K562 (cell line): ENCODE measurements at regions of chr16 and their contacts with region 1.

Region 1: DNA sequence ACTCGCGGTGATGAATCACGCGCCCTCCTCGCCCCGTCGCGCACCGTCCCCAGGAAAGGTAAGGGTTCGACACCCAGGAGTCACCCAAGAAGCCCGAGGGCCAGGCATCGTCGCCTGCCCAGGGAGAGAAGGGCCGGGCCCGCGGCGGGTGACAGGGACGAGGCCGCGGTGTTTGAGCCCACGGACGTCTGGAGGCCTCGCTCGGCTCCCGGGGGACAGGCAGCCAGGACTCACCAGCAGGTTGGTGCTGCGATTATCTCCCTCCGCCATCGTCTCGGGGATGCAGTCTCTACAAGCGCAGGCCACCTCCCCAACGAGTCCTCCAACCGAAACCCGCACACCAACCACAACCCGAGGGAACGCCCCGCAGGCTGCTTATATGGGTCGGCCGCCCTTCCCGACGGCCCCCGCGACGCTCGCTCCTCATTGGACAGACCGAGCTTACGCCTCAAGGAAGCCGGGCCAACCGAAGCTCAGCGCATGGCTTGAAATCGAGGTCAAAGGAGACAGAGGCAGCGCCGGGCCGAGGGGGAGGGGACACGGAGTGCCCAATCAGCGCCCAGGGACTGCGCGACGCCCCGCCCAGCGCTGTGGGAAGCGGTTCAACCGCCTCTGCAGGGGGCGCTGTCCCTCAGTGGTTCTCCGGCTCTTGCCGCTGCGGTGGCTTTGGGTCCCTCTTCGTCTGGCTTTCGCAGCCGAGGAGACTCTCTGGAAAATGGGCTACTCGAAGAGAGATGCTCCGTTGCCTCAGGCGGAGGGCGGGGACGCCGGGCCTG is at the start of gene ARL6IP1:
- DNase-seq: peak; percentile 97 to 99 (median 98)
- ATAC-seq: peak; percentile 96
- H3K4me3 ChIP-seq: peak within 1 kb of the TSS; percentile 85
- H3K27ac ChIP-seq: peak within 1 kb of the TSS; percentile 90
- H3K4me1 ChIP-seq: peaks cover 18 to 23% of the 10 kb centered on the region in 2 experiments; a peak in 4 of 5 replicates
- H3K27me3 ChIP-seq: no peaks in the 10 kb centered on the region
- CTCF ChIP-seq: peak; percentile 80 to 86 (median 85)
- EP300 ChIP-seq: peak; percentile 34
- POLR2A ChIP-seq: peak; percentile 99
- RAD21 ChIP-seq: peak; percentile 31 to 69; a peak in 3 of 4 replicates
- polyA plus RNA-seq, gene ARL6IP1: 291 to 391 TPM

Region 2: GRCh38 chr16:18789850-18790724 is 11.3 kb before region 1 on chr16 and contains the start of gene RPS15A:
- CTCF ChIA-PET with region 1: no interaction called
- POLR2A ChIA-PET with region 1: interaction called, 342 read pairs
- in situ Hi-C with region 1: no loop called
- intact Hi-C with region 1: no loop called
- DNase-seq: peak; percentile 90 to 99 (median 95)
- ATAC-seq: peak; percentile 97
- H3K4me3 ChIP-seq: peak within 1 kb of the TSS; percentile 99
- H3K27ac ChIP-seq: peak within 1 kb of the TSS; percentile 89
- H3K4me1 ChIP-seq: peaks cover 14% of the 10 kb centered on the region in 2 experiments; a peak in 4 of 5 replicates
- H3K27me3 ChIP-seq: no peaks in the 10 kb centered on the region
- CTCF ChIP-seq: no peak
- EP300 ChIP-seq: no peak
- POLR2A ChIP-seq: peak; percentile 99
- RAD21 ChIP-seq: no peak
- polyA plus RNA-seq, gene RPS15A: 1,986 to 2,037 TPM

Region 3: GRCh38 chr16:18816286-18816685 is 14.9 kb after region 1 on chr16:
- CTCF ChIA-PET with region 1: no interaction called
- POLR2A ChIA-PET with region 1: interaction called, 30 read pairs
- in situ Hi-C with region 1: no loop called
- intact Hi-C with region 1: no loop called
- DNase-seq: no peak
- ATAC-seq: no peak
- H3K4me3 ChIP-seq: no peak overlapping the region
- H3K27ac ChIP-seq: no peak overlapping the region
- H3K4me1 ChIP-seq: no peaks in the 10 kb centered on the region
- H3K27me3 ChIP-seq: no peaks in the 10 kb centered on the region
- CTCF ChIP-seq: no peak
- EP300 ChIP-seq: no peak
- POLR2A ChIP-seq: no peak
- RAD21 ChIP-seq: no peak

Region 4: DNA sequence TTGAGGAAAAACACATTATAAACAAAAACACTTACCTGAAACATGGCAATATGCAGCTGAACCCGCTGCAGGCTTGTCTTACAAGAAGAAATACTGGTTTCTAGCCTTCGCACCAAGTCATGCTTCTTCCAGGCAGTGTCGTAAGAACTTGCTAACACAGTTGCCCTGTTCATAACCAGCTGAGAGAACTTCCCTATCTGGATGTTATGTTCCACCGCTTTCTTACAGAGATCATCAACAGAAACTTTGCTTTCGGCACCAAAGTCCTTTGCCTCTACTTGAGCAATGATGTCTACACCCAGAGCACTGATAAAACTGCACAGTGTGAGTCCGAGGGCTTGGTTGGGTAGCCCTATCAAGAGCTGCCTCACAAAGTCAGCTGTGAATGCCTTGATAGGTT is 27.9 kb after region 1 on chr16:
- CTCF ChIA-PET with region 1: no interaction called
- POLR2A ChIA-PET with region 1: interaction called, 27 read pairs
- in situ Hi-C with region 1: no loop called
- intact Hi-C with region 1: no loop called
- DNase-seq: no peak
- ATAC-seq: no peak
- H3K4me3 ChIP-seq: no peak overlapping the region
- H3K27ac ChIP-seq: no peak overlapping the region
- H3K4me1 ChIP-seq: no peaks in the 10 kb centered on the region
- H3K27me3 ChIP-seq: no peaks in the 10 kb centered on the region
- CTCF ChIP-seq: no peak
- EP300 ChIP-seq: no peak
- POLR2A ChIP-seq: no peak
- RAD21 ChIP-seq: no peak

Region 5: GRCh38 chr16:18834864-18835263 is 33.5 kb after region 1 on chr16:
- CTCF ChIA-PET with region 1: no interaction called
- POLR2A ChIA-PET with region 1: interaction called, 27 read pairs
- in situ Hi-C with region 1: no loop called
- intact Hi-C with region 1: no loop called
- DNase-seq: no peak
- ATAC-seq: no peak
- H3K4me3 ChIP-seq: no peak overlapping the region
- H3K27ac ChIP-seq: no peak overlapping the region
- H3K4me1 ChIP-seq: no peaks in the 10 kb centered on the region
- H3K27me3 ChIP-seq: no peaks in the 10 kb centered on the region
- CTCF ChIP-seq: no peak
- EP300 ChIP-seq: no peak
- POLR2A ChIP-seq: no peak
- RAD21 ChIP-seq: no peak

Region 6: DNA sequence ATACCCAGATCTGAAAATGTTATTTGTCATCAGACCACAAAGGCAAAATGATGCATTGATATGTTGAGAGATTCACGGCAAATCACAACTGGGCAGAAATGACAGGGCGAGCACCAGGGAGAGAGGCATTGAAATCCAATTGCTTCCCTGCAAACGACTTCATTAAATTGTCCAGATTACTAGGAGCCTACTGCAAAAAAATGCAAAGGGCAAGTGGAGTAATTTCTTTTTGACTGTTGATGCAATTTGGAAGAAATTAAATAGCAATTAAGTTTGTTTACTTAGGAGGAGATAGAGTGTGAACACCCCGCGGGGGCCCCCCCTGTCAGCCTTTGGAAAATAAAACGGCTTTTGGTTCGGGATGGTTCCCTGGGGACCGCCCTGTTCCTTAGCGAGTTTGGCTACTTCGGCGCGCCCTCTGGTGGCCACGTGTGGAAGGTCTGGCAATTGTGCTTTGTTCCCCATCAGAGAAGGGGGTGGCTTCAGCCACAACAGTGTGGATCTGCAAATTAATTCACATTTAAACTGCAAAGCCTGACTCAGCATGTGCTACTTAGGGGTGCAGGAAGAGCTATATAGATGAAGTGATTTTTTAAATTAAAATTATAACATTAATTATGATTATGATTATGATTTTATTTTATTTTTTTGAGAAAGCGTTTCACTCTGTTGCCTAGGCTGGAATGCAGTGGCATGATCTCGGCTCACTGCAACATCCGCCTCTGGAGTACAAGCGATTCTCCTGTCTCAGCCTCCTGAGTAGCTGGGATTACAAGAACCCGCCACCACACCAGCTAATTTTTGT is 167.9 kb after region 1 on chr16:
- CTCF ChIA-PET with region 1: interaction called, 4 read pairs
- POLR2A ChIA-PET with region 1: interaction called, 9 read pairs
- in situ Hi-C with region 1: no loop called
- intact Hi-C with region 1: loop called (anchors 1 kb)
- DNase-seq: peak; percentile 82 to 87 (median 84)
- ATAC-seq: peak; percentile 98
- H3K4me3 ChIP-seq: no peak overlapping the region
- H3K27ac ChIP-seq: no peak overlapping the region
- H3K4me1 ChIP-seq: no peaks in the 10 kb centered on the region
- H3K27me3 ChIP-seq: peaks cover 3 to 5% of the 10 kb centered on the region in 2 experiments; a peak in 3 of 5 replicates
- CTCF ChIP-seq: peak; percentile 84 to 92 (median 89)
- EP300 ChIP-seq: 0 out of 2 replicates have a peak, but pooled peaks have one; percentile 17
- POLR2A ChIP-seq: no peak
- RAD21 ChIP-seq: peak; percentile 77 to 94